H1 (cell line): ENCODE measurements at regions of chr18 and their contacts with region 1.

Region 1: GRCh38 chr18:65924904-65925303 is 174.1 kb downstream of the CDH7 start:
- DNase-seq: no peak
- H3K4me3 ChIP-seq: no peak overlapping the region
- H3K27ac ChIP-seq: no peak overlapping the region
- H3K4me1 ChIP-seq: no peaks in the 10 kb centered on the region
- H3K27me3 ChIP-seq: no peaks in the 10 kb centered on the region
- CTCF ChIP-seq: no peak
- EP300 ChIP-seq: no peak
- POLR2A ChIP-seq: no peak
- RAD21 ChIP-seq: no peak

Region 2: GRCh38 chr18:65859075-65859474 is 65.8 kb before region 1 on chr18:
- CTCF ChIA-PET with region 1: no interaction called
- POLR2A ChIA-PET with region 1: no interaction called
- DNase-seq: no peak
- H3K4me3 ChIP-seq: no peak overlapping the region
- H3K27ac ChIP-seq: no peak overlapping the region
- H3K4me1 ChIP-seq: no peaks in the 10 kb centered on the region
- H3K27me3 ChIP-seq: no peaks in the 10 kb centered on the region
- CTCF ChIP-seq: no peak
- EP300 ChIP-seq: no peak
- POLR2A ChIP-seq: no peak
- RAD21 ChIP-seq: no peak

Region 3: GRCh38 chr18:65901522-65901921 is 23.4 kb before region 1 on chr18:
- CTCF ChIA-PET with region 1: no interaction called
- POLR2A ChIA-PET with region 1: no interaction called
- DNase-seq: no peak
- H3K4me3 ChIP-seq: no peak overlapping the region
- H3K27ac ChIP-seq: no peak overlapping the region
- H3K4me1 ChIP-seq: no peaks in the 10 kb centered on the region
- H3K27me3 ChIP-seq: peaks cover 15 to 38% (median 29%) of the 10 kb centered on the region in 4 experiments
- CTCF ChIP-seq: no peak
- EP300 ChIP-seq: no peak
- POLR2A ChIP-seq: no peak
- RAD21 ChIP-seq: no peak

Region 4: DNA sequence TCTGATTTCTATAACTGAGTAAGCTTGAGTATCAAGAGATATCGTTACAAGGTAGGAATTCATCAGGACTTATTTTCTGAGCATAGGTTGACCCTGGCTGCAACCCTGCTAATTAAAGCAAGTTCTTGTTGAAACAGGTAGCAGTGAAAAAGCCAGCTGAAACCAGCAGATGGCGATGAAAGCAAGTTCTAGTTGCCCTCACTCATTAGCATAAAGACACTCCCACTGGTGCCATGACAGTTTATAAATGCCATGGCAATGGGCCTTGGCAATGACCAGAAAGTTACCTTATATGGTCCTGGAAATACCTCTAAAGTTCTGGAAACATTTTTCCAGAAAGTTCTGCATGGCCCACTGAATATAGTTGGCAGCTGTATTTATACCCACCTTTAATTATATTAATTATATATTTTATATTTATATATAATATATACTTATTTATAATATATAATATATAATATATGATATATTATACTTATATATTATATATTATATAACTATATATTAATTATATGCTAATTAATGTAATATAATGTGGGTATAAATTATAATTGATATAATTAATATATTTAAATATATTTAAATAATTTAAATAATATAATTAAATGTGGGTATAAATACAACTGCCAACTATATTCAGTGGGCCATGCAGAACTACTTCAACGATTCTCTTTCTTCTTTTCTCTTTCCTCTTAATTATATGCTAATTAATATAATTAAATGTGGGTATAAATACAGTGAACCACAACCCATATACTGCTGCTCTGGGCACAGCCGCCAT is 13.9 kb after region 1 on chr18:
- CTCF ChIA-PET with region 1: interaction called, 13 read pairs
- POLR2A ChIA-PET with region 1: no interaction called
- DNase-seq: peak; percentile 25 to 62
- H3K4me3 ChIP-seq: no peak overlapping the region
- H3K27ac ChIP-seq: no peak overlapping the region
- H3K4me1 ChIP-seq: peaks cover 0 to 8% (median 3%) of the 10 kb centered on the region in 4 experiments; a peak in 3 of 7 replicates
- H3K27me3 ChIP-seq: no peaks in the 10 kb centered on the region
- CTCF ChIP-seq: peak; percentile 2 to 81 (median 58)
- EP300 ChIP-seq: no peak
- POLR2A ChIP-seq: no peak
- RAD21 ChIP-seq: peak; percentile 74 to 77